SK-N-SH (cell line): ENCODE measurements at regions of chr4 and their contacts with region 1.

Region 1: GRCh38 chr4:37615059-37615719 is 71.0 kb downstream of the RELL1 start:
- DNase-seq: peak; percentile 69
- H3K4me3 ChIP-seq: no peak overlapping the region
- H3K27ac ChIP-seq: peak overlapping the region in 1 of 2 experiments; percentile 95; a peak in 2 of 4 replicates
- H3K4me1 ChIP-seq: peaks cover 0 to 28% of the 10 kb centered on the region in 2 experiments; a peak in 3 of 4 replicates
- H3K27me3 ChIP-seq: no peaks in the 10 kb centered on the region
- CTCF ChIP-seq: no peak
- EP300 ChIP-seq: peak in 1 of 2 experiments; percentile 88; a peak in 2 of 4 replicates
- RAD21 ChIP-seq: peak; percentile 7; the same call in 1 of the 2 replicates

Region 2: DNA sequence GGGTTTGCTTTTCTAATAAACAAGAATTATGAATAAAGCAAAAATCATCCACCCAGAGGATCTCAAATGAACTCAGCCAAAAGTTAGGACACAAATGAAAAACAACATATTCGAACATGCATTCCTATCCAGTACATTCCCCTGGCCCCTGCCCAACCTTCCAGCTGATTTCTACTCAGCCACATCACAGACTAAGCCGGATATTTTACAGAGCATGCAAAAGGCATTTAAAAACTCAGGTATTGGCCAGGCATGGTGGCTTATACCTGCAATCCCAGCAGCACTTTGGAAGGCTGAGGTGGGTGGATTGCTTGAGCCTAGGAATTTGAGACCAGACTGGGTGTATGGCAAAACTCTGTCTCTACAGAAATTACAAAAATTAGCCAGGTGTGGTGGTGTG is 16.4 kb after region 1 on chr4:
- CTCF ChIA-PET with region 1: no interaction called
- POLR2A ChIA-PET with region 1: no interaction called
- DNase-seq: no peak
- H3K4me3 ChIP-seq: no peak overlapping the region
- H3K27ac ChIP-seq: no peak overlapping the region
- H3K4me1 ChIP-seq: peaks cover 0 to 3% of the 10 kb centered on the region in 2 experiments; a peak in 2 of 4 replicates
- H3K27me3 ChIP-seq: no peaks in the 10 kb centered on the region
- CTCF ChIP-seq: no peak
- EP300 ChIP-seq: no peak
- RAD21 ChIP-seq: no peak

Region 3: DNA sequence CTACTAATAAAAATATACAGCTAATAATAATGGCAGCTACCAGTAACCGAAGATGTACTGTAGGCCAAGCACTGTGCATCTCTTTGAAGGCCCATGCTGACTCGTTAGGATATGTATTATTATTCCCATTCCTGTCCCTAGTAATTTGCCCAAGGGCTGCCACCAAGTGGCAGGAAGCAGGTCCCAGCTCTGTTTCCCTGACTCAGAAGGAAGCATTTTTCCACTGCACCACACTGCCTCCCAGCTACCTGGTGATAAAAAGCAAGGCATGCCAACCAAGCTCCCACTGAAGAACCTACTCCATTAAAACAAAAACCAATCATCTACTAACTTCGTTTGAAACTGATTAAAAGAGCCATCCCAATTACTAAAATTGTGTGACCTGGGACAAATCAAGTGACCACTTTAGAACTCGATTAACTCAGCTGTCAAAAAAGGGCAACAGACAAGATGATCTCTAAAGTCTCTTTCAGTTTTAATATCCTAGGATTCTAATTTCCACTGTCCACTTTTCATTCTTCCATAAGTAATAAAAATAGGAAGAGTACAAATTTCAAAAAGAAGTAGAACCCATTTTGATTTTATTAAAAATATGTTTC is 187.0 kb after region 1 on chr4:
- CTCF ChIA-PET with region 1: interaction called, 20 read pairs
- POLR2A ChIA-PET with region 1: no interaction called
- DNase-seq: peak; percentile 63
- H3K4me3 ChIP-seq: no peak overlapping the region; a peak in 1 of 4 replicates
- H3K27ac ChIP-seq: no peak overlapping the region
- H3K4me1 ChIP-seq: no peaks in the 10 kb centered on the region
- H3K27me3 ChIP-seq: no peaks in the 10 kb centered on the region
- CTCF ChIP-seq: peak; percentile 70
- EP300 ChIP-seq: peak in 1 of 2 experiments; percentile 21; a peak in 1 of 4 replicates
- RAD21 ChIP-seq: peak; percentile 91